Activated CD4-positive, alpha-beta memory T cell treated with anti-CD3 and anti-CD28 coated beads, Interleukin-2, amount 10 ng/mL, durations not matched to agents 7 days and 5 days (primary cell): ENCODE measurements at regions of chr4 and their contacts with region 1.

Region 1: GRCh38 chr4:10013722-10014121 is 7.6 kb downstream of the SLC2A9 start:
- DNase-seq: peak; percentile 66
- H3K4me3 Mint-ChIP-seq: no peak overlapping the region
- H3K27ac Mint-ChIP-seq: no peak overlapping the region
- H3K4me1 Mint-ChIP-seq: peaks cover 25% of the 10 kb centered on the region
- H3K27me3 Mint-ChIP-seq: no peaks in the 10 kb centered on the region

Region 2: GRCh38 chr4:9704551-9705332 is 309.0 kb before region 1 on chr4:
- CTCF ChIA-PET with region 1: interaction called, 91 read pairs
- POLR2A ChIA-PET with region 1: interaction called, 6 read pairs
- DNase-seq: no peak
- H3K4me3 Mint-ChIP-seq: no peak overlapping the region
- H3K27ac Mint-ChIP-seq: no peak overlapping the region
- H3K4me1 Mint-ChIP-seq: peaks cover 23% of the 10 kb centered on the region
- H3K27me3 Mint-ChIP-seq: no peaks in the 10 kb centered on the region

Region 3: DNA sequence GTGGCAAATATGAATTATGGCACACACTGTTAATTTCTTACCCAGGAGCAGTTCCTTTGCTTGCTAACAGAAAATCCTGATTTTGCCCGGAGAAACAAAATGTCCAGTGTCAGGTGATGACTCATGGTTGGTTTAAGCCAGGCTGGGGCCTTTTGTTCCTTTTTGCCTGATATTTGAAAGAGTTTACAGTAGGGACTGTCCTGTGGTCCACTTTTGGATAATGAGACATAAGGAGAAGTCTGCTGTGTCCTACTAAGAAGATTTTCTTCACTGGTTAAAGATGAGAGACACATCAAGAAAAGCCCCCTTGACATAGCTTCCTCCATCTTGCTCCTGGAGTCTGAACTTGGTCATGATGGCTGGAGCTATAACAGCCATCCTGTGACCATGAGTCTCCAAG is 244.4 kb before region 1 on chr4:
- CTCF ChIA-PET with region 1: interaction called, 136 read pairs
- POLR2A ChIA-PET with region 1: interaction called, 6 read pairs
- DNase-seq: no peak
- H3K4me3 Mint-ChIP-seq: no peak overlapping the region
- H3K27ac Mint-ChIP-seq: no peak overlapping the region
- H3K4me1 Mint-ChIP-seq: peaks cover 1% of the 10 kb centered on the region
- H3K27me3 Mint-ChIP-seq: peaks cover 37% of the 10 kb centered on the region

Region 4: DNA sequence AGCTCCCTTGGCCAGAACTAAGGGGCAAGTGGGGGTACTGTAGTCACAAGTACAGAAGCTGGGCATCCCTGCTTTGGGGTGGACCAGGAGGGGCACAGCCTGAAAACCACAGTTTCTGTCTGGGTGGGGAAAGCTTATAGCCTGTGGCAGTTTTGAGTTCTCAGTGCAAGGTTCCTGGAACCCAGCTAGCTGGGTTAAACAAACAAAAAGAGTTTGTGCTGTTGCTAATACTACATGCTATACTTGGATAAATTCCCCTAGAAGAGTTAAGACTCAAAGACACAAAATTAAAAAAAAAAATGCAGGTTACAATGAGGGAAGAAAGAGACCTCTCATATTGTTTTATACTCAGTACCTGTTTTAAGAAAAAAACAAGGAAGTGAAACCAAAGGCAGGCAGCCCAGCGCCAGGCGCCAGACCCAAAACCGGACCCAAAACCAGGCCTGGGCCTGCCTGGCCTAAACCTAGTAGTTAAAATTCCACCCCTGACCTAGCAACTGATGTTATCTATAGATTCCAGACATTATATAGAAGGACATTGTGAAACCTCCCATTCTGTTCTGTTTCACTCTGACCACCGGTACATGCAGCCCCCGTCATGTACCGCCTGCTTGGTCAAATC is 43.2 kb before region 1 on chr4:
- CTCF ChIA-PET with region 1: interaction called, 24 read pairs
- POLR2A ChIA-PET with region 1: interaction called, 5 read pairs
- DNase-seq: no peak
- H3K4me3 Mint-ChIP-seq: no peak overlapping the region
- H3K27ac Mint-ChIP-seq: peak overlapping the region; percentile 78
- H3K4me1 Mint-ChIP-seq: peaks cover 38% of the 10 kb centered on the region
- H3K27me3 Mint-ChIP-seq: no peaks in the 10 kb centered on the region

Region 5: GRCh38 chr4:9999956-10000551 is 13.7 kb before region 1 on chr4:
- CTCF ChIA-PET with region 1: interaction called, 61 read pairs
- POLR2A ChIA-PET with region 1: interaction called, 4 read pairs
- DNase-seq: no peak
- H3K4me3 Mint-ChIP-seq: peak overlapping the region; percentile 15
- H3K27ac Mint-ChIP-seq: peak overlapping the region; percentile 45
- H3K4me1 Mint-ChIP-seq: peaks cover 88% of the 10 kb centered on the region
- H3K27me3 Mint-ChIP-seq: no peaks in the 10 kb centered on the region

Region 6: DNA sequence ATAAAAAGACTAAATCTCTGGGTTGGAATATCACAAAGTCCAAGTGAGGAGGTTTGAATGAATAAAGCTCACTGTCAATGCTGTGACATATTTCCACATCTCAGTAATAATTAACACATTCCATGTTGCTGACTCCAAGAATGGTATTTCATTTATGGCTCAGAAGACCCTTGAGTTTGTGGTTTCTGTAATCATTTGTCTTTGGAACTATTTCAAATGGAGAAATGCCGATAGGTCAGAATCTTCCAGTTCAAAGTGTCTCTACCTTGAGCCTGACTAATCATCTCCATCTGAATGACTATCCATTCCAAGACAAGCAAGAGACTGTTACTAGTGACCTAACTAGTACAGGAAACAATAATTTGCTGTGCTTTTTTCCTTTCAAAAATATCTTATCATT is 31.8 kb after region 1 on chr4:
- CTCF ChIA-PET with region 1: no interaction called
- POLR2A ChIA-PET with region 1: no interaction called
- DNase-seq: no peak
- H3K4me3 Mint-ChIP-seq: no peak overlapping the region
- H3K27ac Mint-ChIP-seq: no peak overlapping the region
- H3K4me1 Mint-ChIP-seq: peaks cover 19% of the 10 kb centered on the region
- H3K27me3 Mint-ChIP-seq: peaks cover 1% of the 10 kb centered on the region